IMR-90 (cell line): ENCODE measurements at regions of chr16 and their contacts with region 1.

Region 1: DNA sequence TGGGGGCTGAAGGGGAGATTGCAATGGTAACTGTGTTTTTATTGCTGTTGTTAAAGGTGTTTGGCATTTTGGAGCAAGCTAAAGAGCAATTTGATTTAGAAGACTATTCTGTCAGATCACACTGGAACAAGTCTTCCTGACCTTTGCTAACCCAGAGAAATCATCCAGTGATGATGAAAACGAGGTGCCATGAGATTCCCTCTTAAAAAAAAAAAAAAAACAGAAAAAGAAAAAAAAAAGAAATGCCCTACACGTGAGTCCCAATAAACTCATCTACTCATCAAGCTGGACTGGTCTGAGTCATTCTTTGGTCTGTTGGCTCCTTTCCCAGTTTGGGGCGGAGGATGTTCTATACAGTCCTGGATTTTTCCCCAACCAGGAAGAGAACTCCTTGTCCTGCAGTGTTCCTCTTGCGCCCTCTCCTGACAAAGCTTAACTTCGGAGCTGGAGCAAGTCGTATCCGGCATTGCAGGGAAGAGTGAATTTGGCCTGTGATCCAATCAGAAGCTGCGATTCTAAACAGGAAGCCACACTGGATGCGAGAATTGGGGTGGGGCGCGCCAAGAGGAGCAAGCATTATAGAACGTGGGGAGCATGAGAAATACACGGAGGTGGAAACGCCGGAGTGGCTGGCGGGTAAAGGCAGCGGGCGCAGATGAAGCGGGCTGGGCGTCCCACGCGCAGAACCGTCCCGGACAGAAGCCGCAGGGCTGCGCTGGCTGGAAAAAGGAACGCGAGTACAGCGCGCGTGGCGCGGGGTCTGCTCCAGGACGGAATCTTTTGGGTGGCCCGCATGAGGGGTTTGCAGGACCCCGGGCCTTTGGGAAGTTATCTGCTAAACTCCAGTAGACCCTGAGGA is 22.4 kb upstream of the CRYM start:
- DNase-seq: peak; percentile 100
- ATAC-seq: peak; percentile 84
- H3K4me3 ChIP-seq: peak overlapping the region; percentile 71
- H3K27ac ChIP-seq: peak overlapping the region; percentile 11; the same call in 1 of the 2 replicates
- H3K4me1 ChIP-seq: peaks cover 5% of the 10 kb centered on the region
- H3K27me3 ChIP-seq: no peaks in the 10 kb centered on the region
- CTCF ChIP-seq: peak; percentile 99
- POLR2A ChIP-seq: peak; percentile 75
- RAD21 ChIP-seq: peak; percentile 96

Region 2: GRCh38 chr16:20900299-20901067 is 400.1 kb before region 1 on chr16 and contains the starts of genes DCUN1D3 and LYRM1:
- CTCF ChIA-PET with region 1: no interaction called
- POLR2A ChIA-PET with region 1: no interaction called
- dilution Hi-C with region 1: no loop called
- in situ Hi-C with region 1: no loop called
- intact Hi-C with region 1: loop called (anchors 1 kb)
- DNase-seq: peak; percentile 100
- ATAC-seq: peak; percentile 87
- H3K4me3 ChIP-seq: peak within 1 kb of the TSS; percentile 100
- H3K27ac ChIP-seq: peak within 1 kb of the TSS; percentile 100
- H3K4me1 ChIP-seq: peaks cover 10% of the 10 kb centered on the region
- H3K27me3 ChIP-seq: no peaks in the 10 kb centered on the region
- CTCF ChIP-seq: no peak
- POLR2A ChIP-seq: peak; percentile 96
- RAD21 ChIP-seq: no peak
- total RNA-seq, gene DCUN1D3: 42.3 and 51.7 TPM in 2 replicates
- total RNA-seq, gene LYRM1: 35.0 and 43.6 TPM in 2 replicates

Region 3: GRCh38 chr16:20956319-20956718 is 344.2 kb before region 1 on chr16:
- CTCF ChIA-PET with region 1: no interaction called
- POLR2A ChIA-PET with region 1: no interaction called
- dilution Hi-C with region 1: no loop called
- in situ Hi-C with region 1: no loop called
- intact Hi-C with region 1: no loop called
- DNase-seq: peak; percentile 45
- ATAC-seq: peak; percentile 68
- H3K4me3 ChIP-seq: no peak overlapping the region
- H3K27ac ChIP-seq: no peak overlapping the region
- H3K4me1 ChIP-seq: peaks cover 2% of the 10 kb centered on the region; the same call in 1 of the 2 replicates
- H3K27me3 ChIP-seq: no peaks in the 10 kb centered on the region
- CTCF ChIP-seq: no peak; the same call in 1 of the 2 replicates
- POLR2A ChIP-seq: no peak
- RAD21 ChIP-seq: peak; percentile 32; the same call in 1 of the 2 replicates

Region 4: DNA sequence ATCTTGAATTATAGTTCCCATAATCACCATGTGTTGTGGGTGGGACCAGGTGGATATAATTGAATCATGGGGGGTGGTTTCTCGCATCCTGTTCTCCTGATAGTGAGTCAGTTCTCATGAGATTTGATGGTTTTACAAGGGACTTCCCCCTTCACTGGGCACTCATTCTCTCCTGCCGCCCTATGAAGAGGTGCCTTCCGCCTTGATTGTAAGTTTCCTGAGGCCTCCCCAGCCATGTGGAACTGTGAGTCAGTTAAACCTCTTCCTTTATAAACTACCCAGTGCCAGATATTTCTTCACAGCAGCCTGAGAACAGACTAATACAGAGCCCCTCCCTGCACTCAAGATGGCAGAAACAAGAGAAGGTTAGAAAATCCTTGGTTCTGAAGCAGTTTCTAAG is 115.7 kb before region 1 on chr16:
- CTCF ChIA-PET with region 1: interaction called, 31 read pairs
- POLR2A ChIA-PET with region 1: interaction called, 17 read pairs
- dilution Hi-C with region 1: no loop called
- in situ Hi-C with region 1: loop called (anchors 5 kb)
- intact Hi-C with region 1: loop called (anchors 1 kb)
- DNase-seq: no peak
- ATAC-seq: no peak
- H3K4me3 ChIP-seq: no peak overlapping the region
- H3K27ac ChIP-seq: no peak overlapping the region
- H3K4me1 ChIP-seq: peaks cover 6% of the 10 kb centered on the region
- H3K27me3 ChIP-seq: no peaks in the 10 kb centered on the region
- CTCF ChIP-seq: no peak
- POLR2A ChIP-seq: no peak
- RAD21 ChIP-seq: no peak

Region 5: GRCh38 chr16:21233521-21234150 is 66.9 kb before region 1 on chr16 and contains the start of gene ANKS4B:
- CTCF ChIA-PET with region 1: no interaction called
- POLR2A ChIA-PET with region 1: no interaction called
- dilution Hi-C with region 1: no loop called
- in situ Hi-C with region 1: no loop called
- intact Hi-C with region 1: no loop called
- DNase-seq: no peak
- ATAC-seq: no peak
- H3K4me3 ChIP-seq: no peak within 1 kb of the TSS
- H3K27ac ChIP-seq: no peak within 1 kb of the TSS
- H3K4me1 ChIP-seq: no peaks in the 10 kb centered on the region
- H3K27me3 ChIP-seq: peaks cover 9% of the 10 kb centered on the region
- CTCF ChIP-seq: no peak
- POLR2A ChIP-seq: no peak
- RAD21 ChIP-seq: no peak
- total RNA-seq, gene ANKS4B: not detected in 2 replicates

Region 6: DNA sequence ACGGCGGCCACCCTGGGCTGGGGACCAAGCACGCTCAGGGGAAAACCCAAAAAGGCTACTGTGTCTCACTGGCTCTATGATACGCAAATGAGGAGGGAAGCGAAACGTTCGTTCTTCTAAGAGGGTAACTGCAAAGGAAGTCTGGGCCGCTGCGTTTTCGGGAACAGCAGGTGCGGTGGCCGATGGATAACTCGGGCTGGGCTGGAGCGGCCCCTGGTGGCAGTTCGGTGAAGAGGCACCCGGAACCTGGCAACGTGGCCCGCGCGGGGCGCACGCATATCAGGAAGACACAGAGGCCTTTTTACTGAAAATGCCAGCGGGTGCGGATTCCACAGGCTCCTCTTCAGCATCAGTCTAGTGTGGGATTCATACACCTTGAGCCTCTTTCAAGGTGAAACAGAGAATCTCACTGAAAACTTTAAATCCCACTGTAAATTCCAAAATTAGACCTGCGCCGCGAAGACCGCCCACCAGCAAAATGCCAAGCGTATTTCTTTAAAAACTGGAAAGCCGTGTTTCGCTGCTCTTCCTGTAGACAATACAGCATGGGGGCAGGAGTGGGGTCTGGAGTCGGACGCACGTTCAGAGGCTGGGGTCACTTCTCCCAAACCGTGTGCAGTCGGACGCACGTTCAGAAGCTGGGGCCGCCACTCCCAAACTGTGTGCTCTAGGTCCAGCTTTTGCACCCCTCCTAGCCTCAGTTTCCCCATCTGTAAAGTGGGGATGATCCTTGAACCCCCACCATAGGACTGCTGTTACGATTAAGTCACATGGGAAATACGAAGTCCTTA is 254.5 kb after region 1 on chr16:
- CTCF ChIA-PET with region 1: no interaction called
- POLR2A ChIA-PET with region 1: no interaction called
- dilution Hi-C with region 1: no loop called
- in situ Hi-C with region 1: no loop called
- intact Hi-C with region 1: loop called (anchors 5 kb)
- DNase-seq: peak; percentile 71
- ATAC-seq: peak; percentile 99
- H3K4me3 ChIP-seq: no peak overlapping the region
- H3K27ac ChIP-seq: no peak overlapping the region
- H3K4me1 ChIP-seq: no peaks in the 10 kb centered on the region
- H3K27me3 ChIP-seq: peaks cover 13% of the 10 kb centered on the region
- CTCF ChIP-seq: peak; percentile 98
- POLR2A ChIP-seq: peak; percentile 54; the same call in 1 of the 2 replicates
- RAD21 ChIP-seq: peak; percentile 99

Region 7: GRCh38 chr16:21946889-21947635 is 646.5 kb after region 1 on chr16:
- CTCF ChIA-PET with region 1: no interaction called
- POLR2A ChIA-PET with region 1: no interaction called
- dilution Hi-C with region 1: no loop called
- in situ Hi-C with region 1: no loop called
- intact Hi-C with region 1: no loop called
- DNase-seq: no peak
- ATAC-seq: no peak
- H3K4me3 ChIP-seq: no peak overlapping the region
- H3K27ac ChIP-seq: no peak overlapping the region
- H3K4me1 ChIP-seq: no peaks in the 10 kb centered on the region
- H3K27me3 ChIP-seq: no peaks in the 10 kb centered on the region; the same call in none of the 2 replicates
- CTCF ChIP-seq: no peak
- POLR2A ChIP-seq: no peak
- RAD21 ChIP-seq: no peak

Region 8: DNA sequence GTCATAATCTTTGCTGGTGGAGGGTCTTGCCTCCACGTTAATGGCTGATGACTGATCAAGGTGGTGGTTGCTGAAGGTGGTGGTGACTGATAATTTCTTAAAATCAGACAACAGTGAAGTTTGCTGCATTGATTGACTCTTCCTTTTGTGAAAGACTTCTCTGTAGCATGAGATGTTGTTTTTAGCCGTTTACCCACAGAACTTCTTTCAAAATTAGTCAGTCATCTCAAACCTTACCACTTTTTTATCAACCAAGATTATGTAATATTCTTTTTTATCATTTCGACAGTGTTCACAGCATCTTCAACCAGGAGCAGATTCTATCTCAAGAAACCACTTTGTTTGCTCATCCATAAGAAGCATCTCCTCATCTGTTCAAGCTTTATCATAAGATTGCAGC is 658.5 kb after region 1 on chr16:
- CTCF ChIA-PET with region 1: no interaction called
- POLR2A ChIA-PET with region 1: no interaction called
- dilution Hi-C with region 1: no loop called
- in situ Hi-C with region 1: no loop called
- intact Hi-C with region 1: no loop called
- DNase-seq: no peak
- ATAC-seq: no peak
- H3K4me3 ChIP-seq: no peak overlapping the region
- H3K27ac ChIP-seq: no peak overlapping the region
- H3K4me1 ChIP-seq: peaks cover 2% of the 10 kb centered on the region
- H3K27me3 ChIP-seq: no peaks in the 10 kb centered on the region
- CTCF ChIP-seq: no peak
- POLR2A ChIP-seq: no peak
- RAD21 ChIP-seq: no peak